ENCODE measurements at regions of chr11 and their contacts with region 1.

Region 1: GRCh38 chr11:86938900-86939880 is 16.0 kb downstream of the FZD4 start:
- DNase-seq: no peak
- H3K4me3 Mint-ChIP-seq: no peak overlapping the region
- H3K27ac Mint-ChIP-seq: no peak overlapping the region
- H3K4me1 Mint-ChIP-seq: no peaks in the 10 kb centered on the region
- H3K27me3 Mint-ChIP-seq: peaks cover 8% of the 10 kb centered on the region

Region 2: GRCh38 chr11:86818466-86819192 is 120.6 kb before region 1 on chr11:
- CTCF ChIA-PET with region 1: no interaction called
- DNase-seq: no peak
- H3K4me3 Mint-ChIP-seq: no peak overlapping the region
- H3K27ac Mint-ChIP-seq: no peak overlapping the region
- H3K4me1 Mint-ChIP-seq: no peaks in the 10 kb centered on the region
- H3K27me3 Mint-ChIP-seq: peaks cover 18% of the 10 kb centered on the region

Region 3: DNA sequence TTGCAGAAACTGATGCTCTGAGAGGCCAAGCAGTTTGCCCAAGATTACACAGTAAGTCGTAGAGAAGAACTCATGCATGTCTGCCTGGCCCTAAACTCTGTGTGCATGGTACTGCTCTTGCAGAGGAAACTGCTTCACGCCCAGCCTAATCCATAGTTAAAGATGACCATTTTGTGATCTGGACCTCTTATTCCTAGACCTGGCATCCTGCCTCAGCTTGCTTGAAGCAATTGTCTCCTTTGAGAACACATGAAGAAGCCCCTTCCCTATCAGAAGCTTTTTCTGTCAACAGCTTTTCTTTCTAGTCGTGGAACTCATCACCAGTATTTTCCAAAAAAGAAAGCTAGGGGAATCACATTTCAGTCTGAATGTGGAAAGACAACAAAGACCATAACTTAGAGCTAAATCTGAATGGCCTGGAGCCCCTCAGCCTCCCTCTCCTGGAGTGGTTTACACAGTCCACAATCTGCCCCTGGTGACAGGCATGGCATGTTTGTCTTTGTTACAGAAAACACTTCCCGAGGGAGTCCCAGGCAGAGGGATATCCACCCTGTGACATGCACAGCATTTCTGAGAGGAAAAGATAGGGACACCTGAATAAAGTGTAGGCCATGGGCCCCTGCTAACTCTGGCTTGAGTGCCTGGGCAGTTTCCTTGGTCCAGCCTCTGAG is 18.9 kb after region 1 on chr11:
- CTCF ChIA-PET with region 1: interaction called, 12 read pairs
- DNase-seq: no peak
- H3K4me3 Mint-ChIP-seq: no peak overlapping the region
- H3K27ac Mint-ChIP-seq: no peak overlapping the region
- H3K4me1 Mint-ChIP-seq: peaks cover 17% of the 10 kb centered on the region
- H3K27me3 Mint-ChIP-seq: peaks cover 54% of the 10 kb centered on the region

Region 4: DNA sequence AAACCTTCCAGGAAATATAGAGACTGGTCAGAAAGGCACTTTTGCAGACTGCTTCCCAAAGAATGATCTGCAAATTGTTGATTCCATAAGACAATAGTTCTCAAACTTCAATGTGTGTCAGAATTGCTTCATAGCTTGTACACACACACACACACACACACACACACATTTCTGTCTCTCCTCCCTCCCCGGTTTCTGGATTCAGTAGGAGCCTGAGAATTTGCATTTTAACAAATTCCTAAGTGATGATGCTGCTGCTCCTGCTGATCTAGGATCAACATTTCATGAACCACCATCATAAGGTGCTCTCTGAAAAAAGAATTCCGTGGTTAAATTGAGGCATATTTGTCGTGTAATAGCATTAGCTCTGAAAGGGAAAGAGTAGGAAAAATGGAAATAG is 51.3 kb after region 1 on chr11:
- CTCF ChIA-PET with region 1: interaction called, 10 read pairs
- DNase-seq: no peak
- H3K4me3 Mint-ChIP-seq: no peak overlapping the region
- H3K27ac Mint-ChIP-seq: no peak overlapping the region
- H3K4me1 Mint-ChIP-seq: no peaks in the 10 kb centered on the region
- H3K27me3 Mint-ChIP-seq: peaks cover 12% of the 10 kb centered on the region

Region 5: GRCh38 chr11:87290304-87290922 is 351.2 kb after region 1 on chr11:
- CTCF ChIA-PET with region 1: interaction called, 21 read pairs
- DNase-seq: no peak
- H3K4me3 Mint-ChIP-seq: no peak overlapping the region
- H3K27ac Mint-ChIP-seq: no peak overlapping the region
- H3K4me1 Mint-ChIP-seq: no peaks in the 10 kb centered on the region
- H3K27me3 Mint-ChIP-seq: no peaks in the 10 kb centered on the region

Region 6: GRCh38 chr11:87300640-87301380 is 361.6 kb after region 1 on chr11:
- CTCF ChIA-PET with region 1: interaction called, 10 read pairs
- DNase-seq: no peak
- H3K4me3 Mint-ChIP-seq: no peak overlapping the region
- H3K27ac Mint-ChIP-seq: no peak overlapping the region
- H3K4me1 Mint-ChIP-seq: peaks cover 7% of the 10 kb centered on the region
- H3K27me3 Mint-ChIP-seq: no peaks in the 10 kb centered on the region

Measured in activated naive CD4-positive, alpha-beta T cell treated with anti-CD3 and anti-CD28 coated beads, Interleukin-2, amount 10 ng/mL, durations not matched to agents 7 days and 5 days (primary cell).